Ovary (tissue), 10 donors: ENCODE measurements at regions of chr2 and their contacts with region 1.

Region 1: GRCh38 chr2:85772019-85772745 is 18.4 kb downstream of the ATOH8 start:
- DNase-seq: peak; percentile 99 to 100 (median 100)
- H3K4me3 ChIP-seq: peak overlapping the region; percentile 24
- H3K27ac ChIP-seq: peak overlapping the region; percentile 36 to 84
- H3K4me1 ChIP-seq: peaks cover 53% of the 10 kb centered on the region
- H3K27me3 ChIP-seq: no peaks in the 10 kb centered on the region
- CTCF ChIP-seq: peak in 2 of 3 donors; percentile 37 to 56
- EP300 ChIP-seq: peak; percentile 93
- POLR2A ChIP-seq: peak; percentile 22

Region 2: GRCh38 chr2:85750587-85751575 is 21.3 kb before region 1 on chr2:
- intact Hi-C with region 1: loop called in 1 of 4 experiments (anchors 2 kb)
- DNase-seq: peak; percentile 67 to 81 (median 75)
- H3K4me3 ChIP-seq: no peak overlapping the region
- H3K27ac ChIP-seq: no peak overlapping the region
- H3K4me1 ChIP-seq: peaks cover 12% of the 10 kb centered on the region
- H3K27me3 ChIP-seq: no peaks in the 10 kb centered on the region
- CTCF ChIP-seq: peak; percentile 51 to 72 (median 67)
- EP300 ChIP-seq: no peak
- POLR2A ChIP-seq: no peak

Region 3: GRCh38 chr2:85813982-85814801 is 42.0 kb after region 1 on chr2:
- intact Hi-C with region 1: loop called in 1 of 4 experiments (anchors 5 kb)
- DNase-seq: peak; percentile 90 to 94 (median 94)
- H3K4me3 ChIP-seq: no peak overlapping the region
- H3K27ac ChIP-seq: no peak overlapping the region
- H3K4me1 ChIP-seq: peaks cover 9% of the 10 kb centered on the region
- H3K27me3 ChIP-seq: no peaks in the 10 kb centered on the region
- CTCF ChIP-seq: peak; percentile 86 to 97 (median 96)
- EP300 ChIP-seq: no peak
- POLR2A ChIP-seq: no peak

Region 4: GRCh38 chr2:85865539-85866164 is 93.5 kb after region 1 on chr2:
- intact Hi-C with region 1: no loop called
- DNase-seq: no peak
- H3K4me3 ChIP-seq: no peak overlapping the region
- H3K27ac ChIP-seq: no peak overlapping the region
- H3K4me1 ChIP-seq: peaks cover 4% of the 10 kb centered on the region
- H3K27me3 ChIP-seq: no peaks in the 10 kb centered on the region
- CTCF ChIP-seq: no peak
- EP300 ChIP-seq: no peak
- POLR2A ChIP-seq: no peak